Heart left ventricle (tissue), 16 donors: ENCODE measurements at regions of chr13 and their contacts with region 1.

Region 1: GRCh38 chr13:82432949-82433348 is 1449.3 kb downstream of the SLITRK1 start:
- DNase-seq: no peak
- ATAC-seq: no peak
- H3K4me3 ChIP-seq: no peak overlapping the region
- H3K27ac ChIP-seq: no peak overlapping the region
- H3K4me1 ChIP-seq: no peaks in the 10 kb centered on the region
- H3K27me3 ChIP-seq: no peaks in the 10 kb centered on the region
- CTCF ChIP-seq: no peak
- POLR2A ChIP-seq: no peak

Region 2: GRCh38 chr13:82269321-82269720 is 163.6 kb before region 1 on chr13:
- intact Hi-C with region 1: no loop called
- DNase-seq: no peak
- ATAC-seq: no peak
- H3K4me3 ChIP-seq: no peak overlapping the region
- H3K27ac ChIP-seq: no peak overlapping the region
- H3K4me1 ChIP-seq: no peaks in the 10 kb centered on the region
- H3K27me3 ChIP-seq: no peaks in the 10 kb centered on the region
- CTCF ChIP-seq: no peak
- POLR2A ChIP-seq: no peak

Region 3: GRCh38 chr13:82364525-82364924 is 68.4 kb before region 1 on chr13:
- intact Hi-C with region 1: no loop called
- DNase-seq: no peak
- ATAC-seq: no peak
- H3K4me3 ChIP-seq: no peak overlapping the region
- H3K27ac ChIP-seq: no peak overlapping the region
- H3K4me1 ChIP-seq: no peaks in the 10 kb centered on the region
- H3K27me3 ChIP-seq: no peaks in the 10 kb centered on the region
- CTCF ChIP-seq: no peak
- POLR2A ChIP-seq: no peak

Region 4: DNA sequence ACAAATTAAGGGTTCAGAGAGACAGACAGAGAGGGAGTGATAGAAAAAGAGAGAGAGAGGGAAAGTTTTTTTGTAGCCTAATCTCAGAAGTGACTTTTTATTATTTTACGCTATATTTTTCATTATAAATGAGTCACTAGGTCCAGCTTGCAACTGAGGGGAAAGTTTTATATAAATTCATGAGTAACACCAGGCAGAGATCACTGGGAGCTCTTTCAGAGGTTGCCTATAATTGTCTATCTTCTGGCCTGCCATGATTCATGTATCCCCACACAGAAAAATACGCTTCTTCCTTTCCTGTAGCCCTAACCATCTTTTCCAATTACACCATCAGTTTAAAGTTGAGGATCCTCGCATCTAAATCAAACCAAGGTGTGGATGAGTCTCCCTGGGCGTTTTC is 981.4 kb after region 1 on chr13:
- intact Hi-C with region 1: loop called in 1 of 10 experiments (anchors 5 kb)
- DNase-seq: no peak
- ATAC-seq: no peak
- H3K4me3 ChIP-seq: no peak overlapping the region
- H3K27ac ChIP-seq: no peak overlapping the region
- H3K4me1 ChIP-seq: no peaks in the 10 kb centered on the region
- H3K27me3 ChIP-seq: no peaks in the 10 kb centered on the region
- CTCF ChIP-seq: no peak
- POLR2A ChIP-seq: no peak